Right ventricle myocardium superior (tissue), 1 donor: ENCODE measurements at regions of chr17 and their contacts with region 1.

Region 1: DNA sequence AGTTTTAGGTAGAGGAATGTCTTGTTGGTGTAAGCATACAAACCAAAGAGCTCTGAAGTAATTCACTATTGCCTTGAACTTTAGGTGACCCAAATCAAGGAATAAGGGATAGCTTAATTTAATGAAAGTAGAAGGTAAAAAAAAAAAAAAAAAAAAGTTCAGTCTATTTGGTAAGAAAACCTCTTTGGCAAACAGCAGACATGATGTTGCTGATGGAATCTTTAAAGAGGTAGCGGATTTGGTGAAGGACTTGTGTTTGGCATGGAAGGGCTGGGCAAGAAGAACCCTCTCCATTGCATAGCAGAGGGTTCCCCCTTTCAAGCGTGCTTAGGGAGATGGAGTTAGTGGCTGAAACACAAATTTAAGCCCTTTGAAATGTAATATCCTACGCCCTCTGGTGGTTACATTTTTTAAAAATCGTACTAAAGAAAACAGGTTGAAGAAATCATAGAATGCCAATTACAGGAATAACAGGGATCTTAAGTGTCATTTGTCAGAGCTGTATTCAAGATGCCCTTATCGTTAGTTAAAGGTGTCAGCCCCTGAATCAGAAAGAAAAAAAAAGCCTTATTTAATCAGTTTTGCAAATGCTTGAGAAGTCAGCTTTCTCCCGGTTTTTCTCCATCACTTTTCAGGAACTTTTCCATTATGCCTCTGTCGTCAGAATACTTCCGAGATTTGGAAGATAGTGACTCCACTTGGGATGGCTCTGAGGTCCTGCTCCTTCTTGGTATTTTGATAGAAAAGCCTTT is 383.1 kb downstream of the KCNJ2 start:
- DNase-seq: no peak
- ATAC-seq: peak; percentile 88

Region 2: GRCh38 chr17:70313057-70313852 is 239.2 kb before region 1 on chr17:
- intact Hi-C with region 1: loop called (anchors 10 kb)
- DNase-seq: no peak
- ATAC-seq: no peak